ENCODE measurements at regions of chr1 and their contacts with region 1.

Region 1: DNA sequence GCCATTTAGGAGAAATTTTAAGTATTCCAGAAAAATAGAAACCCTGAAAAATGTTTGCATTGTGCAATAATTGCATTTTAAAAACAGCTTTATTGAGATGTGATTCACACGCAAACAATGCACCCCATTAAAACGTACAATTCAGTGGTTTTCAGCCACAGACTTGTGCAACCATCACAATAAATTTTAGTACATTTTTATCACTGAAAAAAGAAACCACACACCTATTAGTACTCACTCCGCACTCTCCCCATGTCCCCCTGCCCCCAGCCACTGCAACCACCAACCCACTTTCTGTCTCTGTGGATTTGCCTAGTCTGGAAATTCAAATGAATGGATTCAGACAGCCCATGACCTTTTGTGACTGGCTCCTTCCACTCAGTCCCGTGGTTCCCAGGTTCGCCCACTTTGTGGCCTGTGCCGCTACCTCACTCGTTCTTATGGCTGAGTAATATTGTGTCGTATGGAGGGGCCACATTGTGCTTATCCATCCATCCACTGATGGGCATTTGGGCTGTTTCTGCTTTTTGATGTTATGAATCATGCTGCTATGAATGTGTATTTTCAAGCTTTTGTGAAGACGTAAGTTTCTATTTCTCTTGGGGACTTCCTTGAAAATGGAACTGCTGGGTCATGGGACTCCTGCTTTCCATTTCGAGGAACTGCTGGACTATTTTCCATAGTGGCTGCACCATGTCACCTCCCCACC is 147.7 kb upstream of the ARHGEF16 start:
- DNase-seq: no peak
- ATAC-seq: peak; percentile 27
- H3K4me3 ChIP-seq: no peak overlapping the region
- H3K27ac ChIP-seq: peak overlapping the region in 1 of 2 donors; percentile 25
- H3K4me1 ChIP-seq: peaks cover 1 to 3% of the 10 kb centered on the region in 2 donors
- H3K27me3 ChIP-seq: no peaks in the 10 kb centered on the region

Region 2: GRCh38 chr1:2921970-2922686 is 384.6 kb before region 1 on chr1:
- intact Hi-C with region 1: loop called in 1 of 2 experiments (anchors 10 kb)
- DNase-seq: no peak
- ATAC-seq: no peak
- H3K4me3 ChIP-seq: no peak overlapping the region
- H3K27ac ChIP-seq: no peak overlapping the region
- H3K4me1 ChIP-seq: no peaks in the 10 kb centered on the region
- H3K27me3 ChIP-seq: no peaks in the 10 kb centered on the region

Region 3: DNA sequence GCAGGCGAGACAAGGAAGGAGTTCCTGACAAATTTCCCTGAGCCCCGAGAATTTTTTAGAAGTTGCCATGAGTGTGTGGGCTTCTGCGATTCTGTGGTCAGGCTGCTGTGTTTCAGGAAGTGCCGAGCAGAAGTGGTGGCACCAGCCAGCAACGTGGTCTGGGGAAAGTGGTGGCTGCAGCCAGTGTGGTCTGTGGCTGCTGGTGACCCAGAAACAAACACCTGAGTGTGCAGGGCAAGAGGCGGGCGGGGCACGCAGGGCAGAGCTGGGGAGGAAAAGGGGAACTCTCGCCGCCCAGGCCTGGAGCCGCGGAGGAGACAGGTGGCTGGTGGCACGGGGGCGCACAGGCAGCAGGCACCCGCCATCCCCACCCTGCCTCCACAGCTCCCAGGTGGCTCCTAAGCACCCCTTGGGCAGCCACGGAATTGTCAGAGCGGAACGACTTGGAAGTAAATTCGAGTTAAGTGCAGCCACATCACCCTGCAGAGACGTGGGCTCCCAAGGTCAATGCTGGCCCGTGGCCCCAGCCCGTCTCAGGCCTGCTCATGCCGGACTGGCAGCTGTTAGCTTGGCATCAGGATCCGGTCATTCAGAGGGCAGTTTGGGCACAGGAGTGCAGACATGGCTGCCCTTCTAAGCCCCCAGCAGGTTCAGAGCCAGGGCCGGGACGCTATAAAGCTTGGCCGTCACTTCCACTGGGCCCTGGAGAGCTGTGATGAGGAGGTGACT is 212.7 kb before region 1 on chr1:
- intact Hi-C with region 1: no loop called
- DNase-seq: no peak
- ATAC-seq: no peak
- H3K4me3 ChIP-seq: no peak overlapping the region
- H3K27ac ChIP-seq: peak overlapping the region in 1 of 2 donors; percentile 6
- H3K4me1 ChIP-seq: no peaks in the 10 kb centered on the region
- H3K27me3 ChIP-seq: no peaks in the 10 kb centered on the region

Measured in aorta (tissue), 5 donors.